ENCODE measurements at regions of chr19 and their contacts with region 1.

Region 1: GRCh38 chr19:37655689-37656371 is 565 bp upstream of the ZFP30 start:
- DNase-seq: peak; percentile 71 to 91 (median 82)
- H3K4me3 ChIP-seq: peak overlapping the region; percentile 58 to 99 (median 86)
- H3K27ac ChIP-seq: peak overlapping the region; percentile 87 to 99 (median 95)
- H3K27me3 ChIP-seq: no peaks in the 10 kb centered on the region
- CTCF ChIP-seq: peak in 9 of 56 donors; percentile 3 to 37 (median 13)

Region 2: DNA sequence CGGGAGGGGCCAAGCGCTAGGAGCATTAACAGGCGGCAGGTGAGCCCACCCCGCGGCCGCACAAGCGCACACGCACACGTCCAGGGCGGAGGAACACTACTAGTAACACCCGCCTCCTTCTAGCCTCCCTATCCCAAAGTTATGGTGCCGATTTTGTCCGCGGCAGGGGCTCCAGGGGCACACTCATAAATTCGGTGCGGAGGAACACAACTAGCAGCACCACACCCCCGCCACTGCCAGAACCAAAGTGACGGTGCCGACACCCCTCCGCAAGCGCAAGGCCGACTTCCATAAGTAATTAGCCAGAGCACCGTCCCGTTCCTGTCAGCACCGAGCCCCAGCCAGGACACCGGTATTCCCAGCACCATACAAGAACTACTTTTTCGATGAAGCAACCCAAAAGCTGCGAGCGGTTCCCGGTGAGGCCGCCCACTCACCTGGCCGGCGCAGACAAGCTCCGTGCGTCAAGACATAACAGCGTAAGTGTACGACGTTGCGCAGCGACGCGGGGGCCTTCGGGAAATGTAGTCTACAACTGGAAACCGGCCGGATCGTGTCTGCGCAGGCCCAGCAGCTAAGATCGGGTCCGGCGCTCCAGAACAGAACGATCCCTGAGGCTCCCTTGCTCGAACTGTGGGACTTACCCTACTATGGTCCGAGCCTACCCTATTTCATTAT is 61.4 kb before region 1 on chr19 and contains the starts of genes ZNF540 and ZNF571:
- intact Hi-C with region 1: loop called (anchors 1 kb)
- DNase-seq: peak; percentile 92 to 97 (median 95)
- H3K4me3 ChIP-seq: peak within 1 kb of the TSS; percentile 61 to 98 (median 85)
- H3K27ac ChIP-seq: peak within 1 kb of the TSS; percentile 73 to 98 (median 94)
- H3K27me3 ChIP-seq: no peaks in the 10 kb centered on the region
- CTCF ChIP-seq: peak in 16 of 56 donors; percentile 3 to 36 (median 14)
- total RNA-seq, gene ZNF540: 15.8 to 44.6 (median 29.0) TPM
- total RNA-seq, gene ZNF571: 6.7 to 27.7 (median 12.5) TPM

Region 3: DNA sequence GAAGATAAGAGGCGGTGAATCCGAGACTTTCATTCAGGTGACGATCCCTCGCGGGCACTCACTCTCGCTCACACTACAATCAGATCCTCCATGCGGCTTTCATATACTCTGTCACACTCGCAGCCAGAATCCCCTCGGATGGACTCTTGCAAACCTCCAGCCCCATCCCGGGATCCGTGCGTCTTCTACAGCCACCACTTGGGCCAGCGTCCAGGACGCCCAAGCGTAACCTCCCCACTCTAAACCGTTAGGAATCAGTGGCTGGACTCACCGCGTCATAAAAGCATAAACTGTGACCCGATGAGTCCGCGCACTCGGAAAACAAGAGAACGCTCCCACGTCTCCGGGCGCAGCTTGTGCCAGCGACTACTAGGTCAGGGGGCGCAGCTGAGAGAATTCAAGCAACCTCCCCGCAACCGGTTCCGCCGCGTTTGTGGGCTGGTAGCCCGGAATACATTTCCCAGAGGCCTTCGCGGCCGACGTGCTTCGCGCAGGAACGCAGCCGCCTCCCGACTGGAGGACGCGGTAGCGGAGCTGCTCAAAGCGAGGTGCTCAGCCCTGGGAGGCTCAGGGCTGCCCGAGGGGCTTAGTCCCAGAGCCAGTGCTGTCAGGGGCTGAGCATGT is 36.2 kb after region 1 on chr19:
- intact Hi-C with region 1: loop called (anchors 1 to 2 kb)
- DNase-seq: peak; percentile 78 to 94 (median 87)
- H3K4me3 ChIP-seq: peak overlapping the region; percentile 57 to 91 (median 77)
- H3K27ac ChIP-seq: peak overlapping the region; percentile 69 to 96 (median 88)
- H3K27me3 ChIP-seq: no peaks in the 10 kb centered on the region
- CTCF ChIP-seq: peak in 52 of 56 donors; percentile 20 to 70 (median 48)

Region 4: GRCh38 chr19:37719111-37719926 is 63.5 kb after region 1 on chr19 and contains the start of gene ZNF607:
- intact Hi-C with region 1: loop called (anchors 1 to 5 kb)
- DNase-seq: peak; percentile 84 to 92 (median 88)
- H3K4me3 ChIP-seq: peak within 1 kb of the TSS; percentile 70 to 99 (median 91)
- H3K27ac ChIP-seq: peak within 1 kb of the TSS in 58 of 59 donors; percentile 30 to 95 (median 91)
- H3K27me3 ChIP-seq: no peaks in the 10 kb centered on the region
- CTCF ChIP-seq: peak; percentile 28 to 82 (median 68)
- total RNA-seq, gene ZNF607: 9.2 to 27.3 (median 16.7) TPM

Region 5: GRCh38 chr19:37779127-37780005 is 123.5 kb after region 1 on chr19 and contains the start of gene ZNF573:
- intact Hi-C with region 1: loop called (anchors 1 to 5 kb)
- DNase-seq: peak; percentile 84 to 92 (median 90)
- H3K4me3 ChIP-seq: peak within 1 kb of the TSS; percentile 41 to 98 (median 83)
- H3K27ac ChIP-seq: peak within 1 kb of the TSS; percentile 48 to 95 (median 86)
- H3K27me3 ChIP-seq: no peaks in the 10 kb centered on the region
- CTCF ChIP-seq: peak in 32 of 56 donors; percentile 3 to 50 (median 29)
- total RNA-seq, gene ZNF573: 15.2 to 40.0 (median 24.8) TPM